ENCODE measurements at regions of chr9 and their contacts with region 1.

Region 1: DNA sequence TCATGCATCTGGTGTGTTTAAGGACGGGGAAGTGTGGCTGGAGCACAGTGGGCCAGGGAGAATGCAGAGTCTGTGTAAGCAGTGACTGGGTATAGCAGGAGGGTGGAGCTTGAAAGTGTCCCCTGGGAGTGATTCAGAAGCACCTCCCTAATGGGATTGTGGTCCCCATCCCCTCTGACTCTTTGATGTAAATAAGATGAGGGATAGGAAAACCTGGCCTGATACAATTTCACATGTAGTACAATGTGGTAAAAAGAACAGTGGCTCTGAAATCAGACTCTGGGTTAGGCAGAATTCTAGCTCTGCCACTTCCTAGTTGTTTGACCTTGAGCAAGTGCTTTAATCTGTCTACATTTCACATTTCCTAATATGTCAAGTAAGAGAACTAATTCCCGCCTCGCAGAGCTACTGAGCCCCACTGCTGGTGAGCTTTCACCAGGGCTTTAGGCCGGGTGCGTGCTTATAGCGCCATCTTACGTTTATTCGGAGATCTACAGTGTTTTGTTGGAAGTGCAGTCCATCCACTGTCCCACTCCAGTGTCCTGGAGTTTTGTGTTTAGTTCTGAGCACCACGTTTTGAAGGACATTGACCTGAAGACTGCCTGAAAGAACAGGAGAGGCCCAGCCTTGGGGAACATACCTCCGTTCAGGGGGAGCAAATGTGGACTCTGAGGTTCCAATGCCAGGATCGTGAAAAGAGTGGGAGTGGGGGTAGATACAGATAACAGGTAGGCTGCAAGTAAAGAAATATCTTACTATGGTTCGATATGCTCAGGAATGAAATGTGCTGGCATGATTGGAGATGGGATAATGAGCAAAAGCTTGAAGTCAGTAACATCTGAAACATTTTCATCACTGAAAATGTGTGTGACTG is 51.2 kb upstream of the TESK1 start:
- DNase-seq: peak; percentile 57 to 81 (median 72)
- H3K4me3 ChIP-seq: no peak overlapping the region
- H3K27ac ChIP-seq: no peak overlapping the region
- H3K4me1 ChIP-seq: peaks cover 0 to 5% (median 3%) of the 10 kb centered on the region in 4 experiments
- H3K27me3 ChIP-seq: no peaks in the 10 kb centered on the region

Region 2: DNA sequence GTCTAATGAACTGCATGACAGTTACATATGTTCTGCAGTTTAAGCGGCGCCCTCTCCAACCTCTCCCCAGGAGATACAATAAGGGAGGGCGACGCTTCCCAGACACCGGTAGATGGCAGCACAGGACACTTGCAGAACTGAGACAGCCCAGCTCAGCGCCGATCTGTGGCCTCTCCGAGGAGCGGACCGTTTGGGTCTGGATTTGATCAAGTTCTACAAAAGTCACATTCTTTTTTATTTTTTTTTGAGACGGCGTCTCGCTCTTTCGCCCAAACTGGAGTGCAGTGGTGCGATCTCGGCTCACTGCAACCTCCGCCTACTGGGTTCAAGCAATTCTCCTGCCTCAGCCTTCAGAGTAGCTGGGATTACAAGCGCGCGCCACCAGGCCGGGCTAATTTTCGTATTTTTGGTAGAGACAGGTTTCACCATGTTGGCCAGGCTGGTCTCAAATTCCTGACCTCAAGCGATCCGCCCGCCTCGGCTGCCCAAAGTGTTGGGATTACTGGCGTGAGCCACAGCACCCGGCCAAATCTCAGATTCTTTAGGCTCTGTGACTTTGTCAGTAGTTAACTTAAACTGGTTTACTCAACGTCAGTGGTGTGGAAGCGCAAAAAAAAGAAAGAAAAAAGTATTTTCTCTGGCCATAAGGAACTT is 436.9 kb before region 1 on chr9:
- CTCF ChIA-PET with region 1: interaction called, 14 read pairs
- POLR2A ChIA-PET with region 1: no interaction called
- DNase-seq: peak; percentile 95 to 98 (median 96)
- H3K4me3 ChIP-seq: peak overlapping the region in 6 of 7 experiments; percentile 75 to 97 (median 83)
- H3K27ac ChIP-seq: no peak overlapping the region
- H3K4me1 ChIP-seq: peaks cover 11 to 43% (median 41%) of the 10 kb centered on the region in 4 experiments
- H3K27me3 ChIP-seq: no peaks in the 10 kb centered on the region

Region 3: DNA sequence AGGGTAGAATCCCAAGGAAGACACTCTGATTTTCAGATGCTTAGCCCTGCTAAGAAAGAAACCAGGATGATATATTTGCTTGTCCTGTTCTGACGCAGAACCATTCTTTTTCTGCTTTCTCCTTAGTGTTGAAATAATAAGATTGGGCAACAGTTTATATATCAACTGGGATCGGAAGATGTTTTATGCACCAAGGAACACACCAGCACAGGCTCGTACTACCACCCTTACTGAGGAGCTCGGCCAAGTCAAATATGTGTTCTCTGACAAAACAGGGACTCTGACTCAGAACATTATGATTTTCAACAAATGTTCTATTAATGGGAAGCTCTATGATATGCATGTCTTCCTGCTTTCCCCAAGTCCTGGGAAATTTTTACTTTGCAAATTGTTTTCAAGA is 83.0 kb before region 1 on chr9:
- CTCF ChIA-PET with region 1: interaction called, 100 read pairs
- POLR2A ChIA-PET with region 1: no interaction called
- DNase-seq: no peak
- H3K4me3 ChIP-seq: no peak overlapping the region
- H3K27ac ChIP-seq: no peak overlapping the region
- H3K4me1 ChIP-seq: no peaks in the 10 kb centered on the region
- H3K27me3 ChIP-seq: peaks cover 0 to 3% (median 0%) of the 10 kb centered on the region in 5 experiments

Region 4: DNA sequence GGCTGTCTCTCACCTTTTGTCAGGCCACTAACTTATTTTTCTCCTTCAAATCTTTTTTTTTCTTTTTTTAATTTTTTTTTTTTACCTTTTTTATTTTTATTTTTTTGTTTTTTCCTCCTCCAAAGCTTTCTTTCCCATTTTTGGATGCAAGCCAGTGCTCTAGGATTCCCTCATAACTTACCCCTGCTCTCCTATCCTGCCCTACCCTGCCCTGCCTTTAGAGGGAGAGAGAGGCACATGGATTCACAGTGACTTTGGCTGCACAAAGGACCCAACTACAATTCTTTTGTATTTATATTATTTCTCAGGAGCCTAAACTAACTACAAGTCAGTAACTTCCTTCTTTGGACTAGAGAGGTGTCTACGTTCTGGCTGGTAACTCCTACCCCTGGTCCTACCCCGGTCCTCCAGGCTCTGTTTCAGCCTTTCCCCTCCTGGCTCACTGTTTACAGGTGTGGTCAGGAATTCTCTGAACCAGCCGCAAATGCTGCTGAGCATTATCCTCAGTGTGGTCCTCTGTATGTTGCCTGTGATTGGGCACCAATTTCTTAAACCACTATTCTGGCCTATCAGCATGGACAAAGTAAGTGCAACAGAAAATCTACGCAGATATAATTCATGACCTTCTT is 72.4 kb before region 1 on chr9:
- CTCF ChIA-PET with region 1: interaction called, 100 read pairs
- POLR2A ChIA-PET with region 1: no interaction called
- DNase-seq: peak; percentile 62 to 84 (median 80)
- H3K4me3 ChIP-seq: no peak overlapping the region
- H3K27ac ChIP-seq: no peak overlapping the region
- H3K4me1 ChIP-seq: peaks cover 0 to 2% (median 0%) of the 10 kb centered on the region in 4 experiments
- H3K27me3 ChIP-seq: no peaks in the 10 kb centered on the region

Region 5: GRCh38 chr9:35489313-35490154 is 64.4 kb before region 1 on chr9 and contains the start of gene RUSC2:
- CTCF ChIA-PET with region 1: interaction called, 53 read pairs
- POLR2A ChIA-PET with region 1: no interaction called
- DNase-seq: peak; percentile 92 to 97 (median 96)
- H3K4me3 ChIP-seq: peak within 1 kb of the TSS; percentile 66 to 90 (median 80)
- H3K27ac ChIP-seq: peak within 1 kb of the TSS; percentile 62 to 74
- H3K4me1 ChIP-seq: peaks cover 15 to 38% (median 35%) of the 10 kb centered on the region in 4 experiments
- H3K27me3 ChIP-seq: no peaks in the 10 kb centered on the region

Region 6: GRCh38 chr9:35526087-35526801 is 27.7 kb before region 1 on chr9:
- CTCF ChIA-PET with region 1: interaction called, 13 read pairs
- POLR2A ChIA-PET with region 1: no interaction called
- DNase-seq: peak in 2 of 3 donors; percentile 23 to 35
- H3K4me3 ChIP-seq: peak overlapping the region in 1 of 7 experiments; percentile 19
- H3K27ac ChIP-seq: no peak overlapping the region
- H3K4me1 ChIP-seq: peaks cover 3 to 20% (median 8%) of the 10 kb centered on the region in 4 experiments
- H3K27me3 ChIP-seq: no peaks in the 10 kb centered on the region

Region 7: GRCh38 chr9:35538361-35539234 is 15.3 kb before region 1 on chr9:
- CTCF ChIA-PET with region 1: interaction called, 44 read pairs
- POLR2A ChIA-PET with region 1: no interaction called
- DNase-seq: no peak
- H3K4me3 ChIP-seq: no peak overlapping the region
- H3K27ac ChIP-seq: no peak overlapping the region
- H3K4me1 ChIP-seq: peaks cover 0 to 13% (median under 1%) of the 10 kb centered on the region in 4 experiments
- H3K27me3 ChIP-seq: no peaks in the 10 kb centered on the region